Upper lobe of right lung (tissue), 1 donor: ENCODE measurements at regions of chr1 and their contacts with region 1.

Region 1: GRCh38 chr1:23916209-23917131 is 3.3 kb upstream of the CNR2 start:
- DNase-seq: peak; percentile 81
- ATAC-seq: peak; percentile 97
- H3K4me3 ChIP-seq: no peak overlapping the region
- H3K27ac ChIP-seq: no peak overlapping the region
- H3K4me1 ChIP-seq: peaks cover 12% of the 10 kb centered on the region
- H3K27me3 ChIP-seq: no peaks in the 10 kb centered on the region
- CTCF ChIP-seq: peak; percentile 64

Region 2: GRCh38 chr1:23763041-23763577 is 153.4 kb before region 1 on chr1:
- intact Hi-C with region 1: loop called (anchors 10 kb)
- DNase-seq: no peak
- ATAC-seq: no peak
- H3K4me3 ChIP-seq: no peak overlapping the region
- H3K27ac ChIP-seq: no peak overlapping the region
- H3K4me1 ChIP-seq: peaks cover 6% of the 10 kb centered on the region
- H3K27me3 ChIP-seq: no peaks in the 10 kb centered on the region
- CTCF ChIP-seq: no peak

Region 3: GRCh38 chr1:24201941-24202440 is 285.5 kb after region 1 on chr1:
- intact Hi-C with region 1: no loop called
- DNase-seq: peak; percentile 73
- ATAC-seq: peak; percentile 87
- H3K4me3 ChIP-seq: no peak overlapping the region
- H3K27ac ChIP-seq: no peak overlapping the region
- H3K4me1 ChIP-seq: peaks cover 8% of the 10 kb centered on the region
- H3K27me3 ChIP-seq: no peaks in the 10 kb centered on the region
- CTCF ChIP-seq: peak; percentile 82